B cell (primary cell): ENCODE measurements at regions of chr6 and their contacts with region 1.

Region 1: DNA sequence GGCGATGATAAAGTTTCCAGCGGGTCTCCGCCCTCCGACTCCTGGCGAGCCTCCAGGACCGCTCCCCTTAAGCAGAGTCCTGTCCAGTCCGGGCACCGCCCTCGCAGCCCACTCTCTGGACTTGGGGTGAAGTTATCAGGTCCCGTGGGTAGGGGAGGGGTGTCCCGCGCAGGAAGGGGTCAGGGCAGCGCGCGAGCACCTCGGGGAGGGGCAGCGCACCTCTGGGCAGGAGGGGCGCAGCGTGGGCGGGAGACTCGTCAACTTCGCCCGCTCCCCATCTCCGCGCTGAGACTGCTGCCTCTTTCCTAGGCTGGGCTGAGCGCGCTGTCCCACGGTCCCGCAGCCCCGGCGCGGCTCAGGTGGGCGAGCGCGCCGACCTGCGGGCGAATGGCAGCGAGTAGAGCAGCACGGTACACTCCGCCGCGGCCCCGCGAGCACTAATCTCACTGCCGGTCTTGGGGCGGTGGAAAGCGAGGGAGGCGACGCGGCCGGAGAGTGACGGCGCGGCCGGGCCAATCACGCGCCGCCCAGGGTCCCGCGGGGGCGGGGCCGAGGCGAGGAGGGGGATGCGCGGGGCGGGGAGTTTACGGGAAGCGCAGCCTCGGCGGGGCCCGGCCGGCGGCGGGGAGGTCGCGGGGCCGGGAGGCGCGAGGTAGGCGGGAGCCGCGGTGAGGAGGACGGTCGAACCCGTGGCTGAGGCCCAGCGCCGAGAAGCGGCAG is at the start of gene MAN1A1:
- DNase-seq: peak; percentile 94
- ATAC-seq: peak; percentile 83
- H3K4me3 ChIP-seq: peak within 1 kb of the TSS; percentile 73 to 95 (median 88)
- H3K4me3 Mint-ChIP-seq: peak within 1 kb of the TSS; percentile 90
- H3K27ac ChIP-seq: peak within 1 kb of the TSS; percentile 85 to 94
- H3K27ac Mint-ChIP-seq: peak within 1 kb of the TSS; percentile 80
- H3K4me1 ChIP-seq: peaks cover 35 to 58% of the 10 kb centered on the region in 2 donors
- H3K4me1 Mint-ChIP-seq: peaks cover 55% of the 10 kb centered on the region
- H3K27me3 ChIP-seq: no peaks in the 10 kb centered on the region
- H3K27me3 Mint-ChIP-seq: no peaks in the 10 kb centered on the region
- CTCF ChIP-seq: no peak
- total RNA-seq, gene MAN1A1: 31.5 and 31.7 TPM in 2 replicates

Region 2: DNA sequence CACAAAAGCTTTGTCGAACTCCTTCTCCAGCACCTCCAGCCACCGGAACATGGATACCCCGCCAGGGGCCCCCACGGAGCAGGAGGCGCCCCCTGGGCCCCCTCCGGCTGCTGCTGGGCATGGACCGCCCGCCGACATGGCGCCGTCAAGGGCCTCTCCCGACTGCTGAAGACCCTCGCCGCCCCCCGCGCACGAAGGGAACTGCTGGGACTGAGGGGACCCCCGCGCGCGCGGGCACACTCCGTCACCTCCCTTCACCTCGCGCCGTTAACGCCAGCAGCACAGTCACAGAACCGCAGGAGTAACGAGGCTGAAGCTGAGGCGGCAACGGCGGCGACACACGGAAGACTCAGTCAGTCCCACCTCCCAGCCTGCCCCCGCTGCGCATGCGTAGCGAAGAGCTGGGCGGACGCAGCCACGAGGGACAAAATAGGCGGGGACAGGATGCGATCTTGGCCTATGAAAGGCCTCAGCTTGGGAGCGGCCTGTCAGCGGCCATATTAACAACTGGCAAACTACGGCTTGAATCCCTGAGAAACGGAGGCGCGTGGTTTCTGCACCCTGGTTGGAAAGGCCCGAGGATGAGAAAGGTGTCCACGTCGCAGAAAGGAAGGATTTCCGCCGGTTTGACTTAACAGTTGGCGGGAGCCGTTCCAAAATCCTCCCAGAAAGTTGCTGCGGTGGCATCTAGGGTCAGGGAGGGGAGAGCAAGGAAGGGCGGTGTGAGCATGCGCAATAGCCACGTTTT is 1747.2 kb before region 1 on chr6 and contains the start of gene GOPC:
- CTCF ChIA-PET with region 1: no interaction called
- POLR2A ChIA-PET with region 1: no interaction called
- intact Hi-C with region 1: loop called (anchors 5 kb)
- DNase-seq: peak; percentile 98
- ATAC-seq: peak; percentile 95
- H3K4me3 ChIP-seq: peak within 1 kb of the TSS; percentile 86 to 96 (median 91)
- H3K4me3 Mint-ChIP-seq: peak within 1 kb of the TSS; percentile 100
- H3K27ac ChIP-seq: peak within 1 kb of the TSS; percentile 70 to 80
- H3K27ac Mint-ChIP-seq: peak within 1 kb of the TSS; percentile 97
- H3K4me1 ChIP-seq: peaks cover 20 to 25% of the 10 kb centered on the region in 2 donors
- H3K4me1 Mint-ChIP-seq: peaks cover 45% of the 10 kb centered on the region
- H3K27me3 ChIP-seq: no peaks in the 10 kb centered on the region
- H3K27me3 Mint-ChIP-seq: peaks cover 3% of the 10 kb centered on the region
- CTCF ChIP-seq: peak; percentile 35
- total RNA-seq, gene GOPC: 25.0 and 26.7 TPM in 2 replicates

Region 3: DNA sequence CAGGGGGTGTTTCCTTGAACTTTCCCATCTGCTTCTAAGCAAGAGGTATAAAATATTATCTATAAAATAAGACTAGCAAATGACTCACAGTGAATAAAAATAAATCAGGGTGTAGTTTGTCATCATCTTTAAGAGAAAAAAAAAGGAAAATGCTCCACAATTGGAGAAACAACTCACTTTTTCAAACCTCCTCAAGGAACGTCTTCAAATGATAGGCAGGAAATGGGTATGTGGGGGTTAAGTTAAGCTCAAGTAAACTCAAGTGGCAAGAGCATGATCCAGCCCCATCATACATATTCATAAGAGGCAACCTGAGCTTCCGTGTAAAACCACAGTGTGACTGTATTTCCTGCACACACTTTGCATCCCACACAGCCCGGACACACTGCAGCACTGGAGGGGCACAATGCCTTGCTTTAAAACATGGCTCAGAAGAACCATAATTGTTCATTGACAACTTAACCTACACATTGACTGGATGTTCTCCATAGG is 639.6 kb before region 1 on chr6:
- CTCF ChIA-PET with region 1: no interaction called
- POLR2A ChIA-PET with region 1: no interaction called
- intact Hi-C with region 1: loop called (anchors 5 kb)
- DNase-seq: peak; percentile 86
- ATAC-seq: peak; percentile 93
- H3K4me3 ChIP-seq: peak overlapping the region; percentile 59 to 93 (median 83)
- H3K4me3 Mint-ChIP-seq: peak overlapping the region; percentile 97
- H3K27ac ChIP-seq: peak overlapping the region; percentile 62 to 86
- H3K27ac Mint-ChIP-seq: peak overlapping the region; percentile 95
- H3K4me1 ChIP-seq: peaks cover 54 to 58% of the 10 kb centered on the region in 2 donors
- H3K4me1 Mint-ChIP-seq: peaks cover 68% of the 10 kb centered on the region
- H3K27me3 ChIP-seq: no peaks in the 10 kb centered on the region
- H3K27me3 Mint-ChIP-seq: no peaks in the 10 kb centered on the region
- CTCF ChIP-seq: no peak

Region 4: GRCh38 chr6:119333707-119334295 is 15.7 kb before region 1 on chr6:
- CTCF ChIA-PET with region 1: interaction called, 23 read pairs
- POLR2A ChIA-PET with region 1: no interaction called
- intact Hi-C with region 1: loop called (anchors 1 kb)
- DNase-seq: peak; percentile 57
- ATAC-seq: peak; percentile 69
- H3K4me3 ChIP-seq: no peak overlapping the region
- H3K4me3 Mint-ChIP-seq: no peak overlapping the region
- H3K27ac ChIP-seq: no peak overlapping the region
- H3K27ac Mint-ChIP-seq: no peak overlapping the region
- H3K4me1 ChIP-seq: peaks cover 12 to 16% of the 10 kb centered on the region in 2 donors
- H3K4me1 Mint-ChIP-seq: peaks cover 38% of the 10 kb centered on the region
- H3K27me3 ChIP-seq: no peaks in the 10 kb centered on the region
- H3K27me3 Mint-ChIP-seq: no peaks in the 10 kb centered on the region
- CTCF ChIP-seq: peak; percentile 81

Region 5: DNA sequence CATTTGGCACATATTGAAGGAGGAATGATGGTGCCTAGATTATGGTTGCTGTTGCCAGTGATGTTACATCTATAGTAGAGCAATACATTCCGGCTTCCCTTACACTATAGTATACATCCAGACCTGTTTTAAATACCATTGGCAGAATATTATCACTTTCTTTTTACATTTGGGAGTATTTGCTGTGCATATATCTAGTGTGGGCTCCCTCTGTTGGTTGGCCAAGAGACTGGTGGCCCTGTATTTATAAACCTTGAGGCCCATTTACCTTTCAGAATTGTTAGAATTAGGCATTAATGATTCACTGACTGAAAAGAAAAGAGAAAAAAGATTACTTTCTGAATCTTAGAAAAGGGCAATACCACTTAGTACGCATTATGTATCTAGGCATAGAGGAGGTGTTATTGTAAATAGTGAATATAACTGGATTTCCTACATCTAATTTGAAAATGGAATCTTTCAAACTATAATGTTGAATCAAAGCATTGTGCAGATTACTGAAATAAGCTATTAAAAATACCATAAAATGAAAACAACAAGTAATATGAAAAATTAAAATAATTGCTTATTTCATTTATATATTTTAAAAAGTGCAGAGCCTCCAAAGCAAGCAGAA is 628.9 kb after region 1 on chr6:
- CTCF ChIA-PET with region 1: interaction called, 13 read pairs
- POLR2A ChIA-PET with region 1: no interaction called
- intact Hi-C with region 1: loop called (anchors 5 kb)
- DNase-seq: peak; percentile 21
- ATAC-seq: no peak
- H3K4me3 ChIP-seq: no peak overlapping the region
- H3K4me3 Mint-ChIP-seq: no peak overlapping the region
- H3K27ac ChIP-seq: no peak overlapping the region
- H3K27ac Mint-ChIP-seq: no peak overlapping the region
- H3K4me1 ChIP-seq: no peaks in the 10 kb centered on the region
- H3K4me1 Mint-ChIP-seq: peaks cover 9% of the 10 kb centered on the region
- H3K27me3 ChIP-seq: no peaks in the 10 kb centered on the region
- H3K27me3 Mint-ChIP-seq: no peaks in the 10 kb centered on the region
- CTCF ChIP-seq: peak; percentile 35